ENCODE measurements at regions of chr10 and their contacts with region 1.

Region 1: GRCh38 chr10:84328418-84329195 is at the start of gene CCSER2:
- DNase-seq: peak; percentile 32
- ATAC-seq: peak; percentile 80
- H3K4me3 ChIP-seq: peak within 1 kb of the TSS; percentile 72 to 84 (median 81)
- H3K27ac ChIP-seq: peak within 1 kb of the TSS; percentile 89
- H3K4me1 ChIP-seq: peaks cover 63% of the 10 kb centered on the region
- H3K27me3 ChIP-seq: no peaks in the 10 kb centered on the region; a peak in 1 of 5 replicates
- CTCF ChIP-seq: no peak
- EP300 ChIP-seq: no peak
- POLR2A ChIP-seq: peak; percentile 54 to 86
- RAD21 ChIP-seq: peak; percentile 38
- total RNA-seq, gene CCSER2: 17.2 and 17.4 TPM in 2 replicates

Region 2: DNA sequence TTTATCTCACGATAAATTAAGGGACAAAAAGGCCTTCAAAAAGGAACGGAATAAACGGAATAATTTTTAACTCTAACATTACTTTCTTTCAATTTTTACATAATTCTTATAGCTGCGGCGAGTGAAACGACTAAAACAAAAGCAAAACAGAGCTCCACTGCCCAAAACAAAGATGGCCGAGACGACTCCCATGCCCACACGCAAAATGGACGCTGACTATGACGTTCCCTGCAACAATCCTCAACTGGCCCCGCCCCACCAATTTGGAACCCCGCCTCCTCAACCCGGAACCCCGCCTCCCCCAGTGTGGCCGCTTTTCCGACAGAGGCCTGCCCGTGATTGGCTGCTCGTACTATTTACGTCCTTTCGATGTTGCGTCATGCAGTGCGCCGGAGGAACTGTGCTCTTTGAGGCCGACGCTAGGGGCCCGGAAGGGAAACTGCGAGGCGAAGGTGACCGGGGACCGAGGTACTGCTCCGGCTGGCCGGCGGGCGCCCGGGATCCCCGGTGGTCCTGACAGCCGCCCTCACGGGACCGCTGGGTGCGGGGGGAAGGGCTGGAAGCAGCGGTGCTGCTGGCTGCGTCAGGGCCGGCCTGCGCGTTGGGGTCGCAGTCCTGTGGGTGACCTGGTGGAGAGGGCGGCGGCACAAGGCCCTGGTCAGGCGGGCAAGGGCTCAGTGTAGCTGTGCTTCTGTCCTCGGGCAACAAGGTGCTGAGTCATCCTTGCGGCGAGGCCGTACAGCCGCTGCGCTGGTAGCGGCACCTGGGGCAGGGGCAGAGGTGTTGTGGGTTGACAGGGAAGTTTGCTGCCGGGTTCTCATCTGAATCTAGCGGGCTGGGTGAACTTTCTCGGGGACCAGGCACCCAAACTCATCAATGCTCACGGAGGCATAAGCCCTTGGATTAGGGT is 189.2 kb before region 1 on chr10 and contains the start of gene GHITM:
- CTCF ChIA-PET with region 1: no interaction called
- POLR2A ChIA-PET with region 1: interaction called, 6 read pairs
- in situ Hi-C with region 1: no loop called
- intact Hi-C with region 1: loop called (anchors 2 kb)
- DNase-seq: peak; percentile 96
- ATAC-seq: peak; percentile 93
- H3K4me3 ChIP-seq: peak within 1 kb of the TSS; percentile 77 to 96 (median 87)
- H3K27ac ChIP-seq: peak within 1 kb of the TSS; percentile 85
- H3K4me1 ChIP-seq: peaks cover 38% of the 10 kb centered on the region
- H3K27me3 ChIP-seq: no peaks in the 10 kb centered on the region; a peak in 1 of 5 replicates
- CTCF ChIP-seq: peak; percentile 37; the same call in 1 of the 2 replicates
- EP300 ChIP-seq: 0 out of 4 replicates have a peak, but pooled peaks of 1 of the 2 experiments have one; percentile 41
- POLR2A ChIP-seq: peak; percentile 79 to 84
- RAD21 ChIP-seq: peak; percentile 49; the same call in 1 of the 2 replicates
- total RNA-seq, gene GHITM: 212 and 345 TPM in 2 replicates

Region 3: GRCh38 chr10:84269773-84270172 is 58.8 kb before region 1 on chr10:
- CTCF ChIA-PET with region 1: no interaction called
- POLR2A ChIA-PET with region 1: no interaction called
- in situ Hi-C with region 1: no loop called
- intact Hi-C with region 1: loop called (anchors 5 kb)
- DNase-seq: no peak
- ATAC-seq: no peak
- H3K4me3 ChIP-seq: no peak overlapping the region
- H3K27ac ChIP-seq: no peak overlapping the region
- H3K4me1 ChIP-seq: peaks cover 14% of the 10 kb centered on the region; the same call in 1 of the 2 replicates
- H3K27me3 ChIP-seq: peaks cover 0 to 20% of the 10 kb centered on the region in 2 experiments; a peak in 1 of 5 replicates
- CTCF ChIP-seq: no peak
- EP300 ChIP-seq: no peak
- POLR2A ChIP-seq: no peak
- RAD21 ChIP-seq: no peak

Region 4: GRCh38 chr10:84360637-84361365 is 32.2 kb after region 1 on chr10:
- CTCF ChIA-PET with region 1: no interaction called
- POLR2A ChIA-PET with region 1: no interaction called
- in situ Hi-C with region 1: no loop called
- intact Hi-C with region 1: loop called (anchors 5 kb)
- DNase-seq: no peak
- ATAC-seq: peak; percentile 60
- H3K4me3 ChIP-seq: peak overlapping the region; percentile 3 to 49 (median 9); a peak in 4 of 6 replicates
- H3K27ac ChIP-seq: no peak overlapping the region
- H3K4me1 ChIP-seq: peaks cover 56% of the 10 kb centered on the region
- H3K27me3 ChIP-seq: no peaks in the 10 kb centered on the region
- CTCF ChIP-seq: no peak
- EP300 ChIP-seq: no peak
- POLR2A ChIP-seq: no peak
- RAD21 ChIP-seq: no peak

Measured in HepG2 (cell line).